ENCODE measurements at regions of chr3 and their contacts with region 1.

Region 1: GRCh38 chr3:29215948-29216347 is 64.9 kb upstream of the RBMS3 start:
- DNase-seq: no peak

Region 2: DNA sequence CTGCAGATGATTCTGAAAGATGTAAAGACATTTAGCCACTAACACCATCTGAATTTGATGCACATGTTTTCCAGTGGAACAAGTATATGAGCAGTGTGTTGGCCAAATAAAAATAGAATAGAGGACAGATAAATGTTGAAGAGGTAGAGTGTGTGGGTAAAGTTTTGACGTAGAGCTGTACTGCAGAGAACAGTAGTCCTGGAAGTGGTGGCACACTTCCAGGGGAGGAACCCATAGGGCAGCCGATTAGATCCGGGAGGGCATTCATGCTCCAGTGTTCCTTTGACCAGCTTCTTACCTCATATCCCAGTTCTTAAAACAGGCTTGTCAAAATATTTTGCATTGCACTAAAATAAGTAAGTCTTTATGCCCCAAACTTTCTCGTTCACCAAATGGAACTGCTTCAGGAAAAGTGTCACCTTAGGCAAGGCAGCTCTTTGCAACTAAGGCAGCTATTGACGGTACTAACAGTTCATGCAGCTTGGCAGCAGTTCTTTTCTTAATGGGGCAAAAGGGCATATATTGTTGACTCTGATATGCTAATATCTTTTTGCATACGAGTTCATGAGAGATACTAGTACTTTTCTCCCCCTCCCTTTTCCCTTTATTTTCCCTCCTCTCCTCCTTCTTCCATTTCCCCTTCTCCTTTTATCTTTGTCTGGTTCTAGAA is 438.0 kb before region 1 on chr3:
- intact Hi-C with region 1: no loop called
- DNase-seq: no peak

Region 3: GRCh38 chr3:29267226-29267625 is 51.3 kb after region 1 on chr3:
- intact Hi-C with region 1: no loop called
- DNase-seq: no peak

Region 4: GRCh38 chr3:30227571-30228301 is 1011.8 kb after region 1 on chr3:
- intact Hi-C with region 1: loop called in 1 of 2 experiments (anchors 5 kb)
- DNase-seq: no peak